IMR-90 (cell line): ENCODE measurements at regions of chr1 and their contacts with region 1.

Region 1: DNA sequence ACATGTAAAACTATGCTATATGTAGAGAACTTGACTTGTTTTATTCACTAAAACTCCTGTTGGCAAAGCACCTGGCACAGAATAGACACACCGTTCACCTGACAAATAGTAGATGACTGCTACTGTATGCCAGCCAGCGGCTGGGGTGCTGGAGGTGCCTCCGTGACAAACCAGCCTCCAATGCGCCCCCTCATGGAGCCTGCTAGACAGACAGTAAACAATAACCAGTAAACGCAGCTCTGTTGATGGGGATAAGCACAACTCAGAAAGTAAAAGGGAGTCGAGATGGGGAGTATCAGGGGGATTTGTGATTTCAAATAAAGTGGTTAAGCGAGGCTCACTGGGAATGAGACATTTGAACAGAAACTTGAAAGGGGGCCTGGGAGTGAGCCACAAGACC is 107.2 kb downstream of the PRDM2 start:
- DNase-seq: no peak
- ATAC-seq: peak; percentile 37; the same call in 1 of the 2 replicates
- H3K4me3 ChIP-seq: no peak overlapping the region
- H3K27ac ChIP-seq: no peak overlapping the region
- H3K4me1 ChIP-seq: no peaks in the 10 kb centered on the region
- H3K27me3 ChIP-seq: no peaks in the 10 kb centered on the region
- CTCF ChIP-seq: peak; percentile 41
- POLR2A ChIP-seq: no peak
- RAD21 ChIP-seq: peak; percentile 38

Region 2: DNA sequence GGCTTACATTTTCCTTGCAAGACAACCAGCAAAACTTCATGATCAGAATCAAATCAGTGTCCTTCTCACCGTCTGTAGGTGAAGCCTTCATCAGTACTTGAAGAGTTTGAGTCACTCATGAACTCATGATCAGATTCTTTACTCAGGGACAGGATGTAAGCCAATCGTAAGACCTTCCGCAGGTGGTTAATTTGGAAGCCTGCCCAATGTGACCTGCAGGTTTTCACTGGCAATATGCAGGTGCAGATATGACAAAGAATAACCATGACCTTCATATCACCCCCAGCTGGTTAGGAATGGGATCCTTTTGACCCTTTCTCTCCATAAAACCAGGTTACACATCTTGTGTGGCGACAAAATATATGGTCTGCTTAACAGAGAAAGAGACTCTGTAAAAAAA is 399.4 kb before region 1 on chr1:
- CTCF ChIA-PET with region 1: no interaction called
- POLR2A ChIA-PET with region 1: no interaction called
- dilution Hi-C with region 1: no loop called
- in situ Hi-C with region 1: no loop called
- intact Hi-C with region 1: no loop called
- DNase-seq: no peak
- ATAC-seq: no peak
- H3K4me3 ChIP-seq: no peak overlapping the region
- H3K27ac ChIP-seq: no peak overlapping the region
- H3K4me1 ChIP-seq: no peaks in the 10 kb centered on the region
- H3K27me3 ChIP-seq: no peaks in the 10 kb centered on the region
- CTCF ChIP-seq: no peak
- POLR2A ChIP-seq: no peak
- RAD21 ChIP-seq: no peak

Region 3: DNA sequence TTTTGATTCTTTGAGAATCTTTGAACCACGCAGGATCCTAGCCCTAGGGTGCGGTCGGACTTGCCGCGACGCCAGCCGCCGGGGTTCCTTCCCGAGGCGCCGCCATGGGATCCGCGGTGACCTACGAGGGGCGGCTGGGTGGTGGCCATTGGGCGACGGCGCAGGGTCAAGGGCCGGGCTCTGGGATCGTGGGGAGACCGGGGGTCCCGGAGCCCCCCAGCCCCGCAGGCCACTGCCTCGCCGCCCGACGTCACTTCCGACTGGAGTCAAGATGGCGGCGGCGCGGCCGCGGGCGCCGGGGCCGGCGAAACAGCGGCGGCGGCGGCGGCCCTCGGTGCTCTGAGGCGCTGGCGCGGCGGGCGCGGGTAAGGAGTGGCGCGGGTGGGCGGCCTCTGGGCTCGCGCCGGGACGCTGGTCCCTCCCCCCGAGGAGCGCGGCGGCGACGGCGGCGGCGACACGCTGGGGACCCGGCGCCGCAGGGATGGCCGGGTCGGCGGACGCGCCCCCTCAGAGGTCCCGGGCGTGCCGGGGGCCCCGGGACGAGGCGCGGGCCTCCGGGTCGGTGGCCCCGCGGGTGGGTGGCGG is 107.2 kb before region 1 on chr1 and contains the start of gene PRDM2:
- CTCF ChIA-PET with region 1: no interaction called
- POLR2A ChIA-PET with region 1: no interaction called
- dilution Hi-C with region 1: no loop called
- in situ Hi-C with region 1: loop called (anchors 10 kb)
- intact Hi-C with region 1: no loop called
- DNase-seq: peak; percentile 17
- ATAC-seq: peak; percentile 90
- H3K4me3 ChIP-seq: peak within 1 kb of the TSS; percentile 96
- H3K27ac ChIP-seq: peak within 1 kb of the TSS; percentile 75
- H3K4me1 ChIP-seq: peaks cover 4% of the 10 kb centered on the region
- H3K27me3 ChIP-seq: no peaks in the 10 kb centered on the region
- CTCF ChIP-seq: no peak
- POLR2A ChIP-seq: no peak; the same call in 1 of the 2 replicates
- RAD21 ChIP-seq: no peak
- total RNA-seq, gene PRDM2: 3.4 and 4.7 TPM in 2 replicates

Region 4: DNA sequence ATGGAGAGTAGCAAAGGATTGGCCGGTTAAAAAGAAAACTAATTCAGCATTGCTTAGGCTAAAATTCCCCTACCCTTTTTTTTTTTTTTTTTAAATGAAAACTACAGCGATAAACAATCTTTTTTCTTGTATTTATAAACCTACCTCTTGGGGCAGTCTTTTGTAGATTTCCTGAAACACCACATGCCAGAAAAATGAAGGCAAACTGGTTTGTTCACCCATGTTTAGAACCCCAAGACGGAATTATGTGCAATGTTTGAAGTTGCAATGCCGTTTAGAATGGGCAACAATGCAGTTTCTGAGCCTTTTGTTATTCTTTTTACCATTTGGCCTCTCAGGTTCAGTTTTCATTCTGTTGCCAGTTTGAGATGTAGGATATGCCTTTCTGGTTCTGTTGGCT is 48.1 kb before region 1 on chr1:
- CTCF ChIA-PET with region 1: no interaction called
- POLR2A ChIA-PET with region 1: no interaction called
- dilution Hi-C with region 1: no loop called
- in situ Hi-C with region 1: loop called (anchors 5 kb)
- intact Hi-C with region 1: no loop called
- DNase-seq: no peak
- ATAC-seq: no peak
- H3K4me3 ChIP-seq: no peak overlapping the region
- H3K27ac ChIP-seq: no peak overlapping the region
- H3K4me1 ChIP-seq: peaks cover 12% of the 10 kb centered on the region
- H3K27me3 ChIP-seq: no peaks in the 10 kb centered on the region
- CTCF ChIP-seq: no peak; the same call in 1 of the 2 replicates
- POLR2A ChIP-seq: no peak
- RAD21 ChIP-seq: no peak